ENCODE measurements at regions of chr2 and their contacts with region 1.

Region 1: GRCh38 chr2:101341901-101342624 is 33.6 kb upstream of the RNF149 start:
- DNase-seq: peak; percentile 68 to 97
- H3K4me3 ChIP-seq: no peak overlapping the region
- H3K27ac ChIP-seq: no peak overlapping the region
- H3K4me1 ChIP-seq: peaks cover 7 to 19% (median 12%) of the 10 kb centered on the region in 4 experiments
- H3K27me3 ChIP-seq: no peaks in the 10 kb centered on the region
- CTCF ChIP-seq: peak; percentile 74 to 88 (median 85)
- EP300 ChIP-seq: no peak
- POLR2A ChIP-seq: no peak
- RAD21 ChIP-seq: peak; percentile 86 to 89

Region 2: DNA sequence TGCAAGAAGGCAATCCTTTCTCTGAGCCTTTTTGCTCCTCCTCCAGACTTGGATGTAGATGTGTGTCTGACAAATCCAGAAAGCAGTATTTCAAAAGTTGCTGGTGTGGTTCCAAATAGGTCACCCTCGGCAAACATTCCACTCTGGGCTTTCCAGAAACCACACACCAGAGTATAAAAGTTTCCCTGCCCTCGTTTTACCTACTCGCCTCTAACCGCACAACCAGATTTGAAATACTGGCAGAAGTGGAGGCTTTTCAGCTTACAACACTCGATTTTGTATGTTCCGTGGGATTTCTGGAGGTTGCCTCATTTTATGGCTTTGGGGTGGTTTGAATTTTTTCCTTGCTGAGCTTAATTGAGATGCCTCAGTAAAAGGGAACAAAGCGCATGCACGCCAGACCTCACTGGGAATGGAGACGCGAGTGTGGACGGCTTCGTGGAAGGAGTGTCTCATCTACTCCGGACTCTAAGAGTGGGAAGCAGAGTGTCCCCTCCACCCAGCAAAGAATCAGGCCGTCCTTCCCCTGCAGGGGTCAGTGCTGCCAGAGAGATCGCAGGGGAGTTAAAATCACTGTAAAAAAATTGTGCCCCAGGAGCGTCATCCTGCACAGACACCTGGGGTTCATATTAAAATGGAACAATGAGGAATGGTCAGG is 383.9 kb before region 1 on chr2:
- CTCF ChIA-PET with region 1: no interaction called
- POLR2A ChIA-PET with region 1: no interaction called
- DNase-seq: no peak
- H3K4me3 ChIP-seq: no peak overlapping the region
- H3K27ac ChIP-seq: no peak overlapping the region
- H3K4me1 ChIP-seq: peaks cover 0 to 3% (median 0%) of the 10 kb centered on the region in 4 experiments; a peak in 1 of 7 replicates
- H3K27me3 ChIP-seq: no peaks in the 10 kb centered on the region
- CTCF ChIP-seq: peak in 1 of 3 experiments; percentile 1; a peak in 1 of 4 replicates
- EP300 ChIP-seq: no peak
- POLR2A ChIP-seq: no peak
- RAD21 ChIP-seq: 0 out of 4 replicates have a peak, but pooled peaks of 1 of the 2 experiments have one; percentile 8

Region 3: GRCh38 chr2:101057051-101057933 is 284.8 kb before region 1 on chr2:
- CTCF ChIA-PET with region 1: no interaction called
- POLR2A ChIA-PET with region 1: no interaction called
- DNase-seq: no peak
- H3K4me3 ChIP-seq: no peak overlapping the region
- H3K27ac ChIP-seq: no peak overlapping the region
- H3K4me1 ChIP-seq: peaks cover 0 to 4% (median 1%) of the 10 kb centered on the region in 4 experiments; a peak in 2 of 7 replicates
- H3K27me3 ChIP-seq: no peaks in the 10 kb centered on the region
- CTCF ChIP-seq: no peak
- EP300 ChIP-seq: no peak
- POLR2A ChIP-seq: no peak
- RAD21 ChIP-seq: no peak

Region 4: DNA sequence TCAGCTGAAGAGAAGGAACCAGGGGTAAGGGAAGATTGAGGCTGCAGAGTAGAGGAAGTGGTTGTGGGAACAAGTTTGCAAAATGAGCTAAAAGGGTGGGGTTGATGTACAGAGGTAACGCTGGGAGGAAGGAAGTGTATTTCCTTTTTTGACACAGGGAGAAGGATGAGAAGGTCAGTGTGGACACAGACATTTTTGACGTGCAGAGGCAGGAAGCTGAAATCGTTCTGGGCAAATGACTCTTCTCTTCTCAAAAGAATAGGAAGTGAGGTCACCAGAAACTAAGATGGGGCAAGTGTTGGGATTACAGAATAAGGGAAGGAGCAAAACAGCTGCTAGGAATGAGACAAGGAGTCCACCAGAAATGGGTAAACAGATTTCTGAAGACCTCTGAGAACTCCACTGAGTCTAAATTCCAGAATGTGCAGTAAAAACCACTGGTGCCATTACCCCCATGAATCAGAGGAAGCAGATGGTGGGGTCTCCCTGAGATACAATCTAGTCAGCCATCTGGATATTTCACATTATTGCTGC is 13.5 kb before region 1 on chr2:
- CTCF ChIA-PET with region 1: interaction called, 19 read pairs
- POLR2A ChIA-PET with region 1: interaction called, 7 read pairs
- DNase-seq: no peak
- H3K4me3 ChIP-seq: no peak overlapping the region; a peak in 1 of 8 replicates
- H3K27ac ChIP-seq: no peak overlapping the region; the same call in 1 of the 2 replicates
- H3K4me1 ChIP-seq: peaks cover 10 to 27% (median 17%) of the 10 kb centered on the region in 4 experiments; a peak in 6 of 7 replicates
- H3K27me3 ChIP-seq: no peaks in the 10 kb centered on the region
- CTCF ChIP-seq: no peak
- EP300 ChIP-seq: no peak
- POLR2A ChIP-seq: no peak
- RAD21 ChIP-seq: no peak

Region 5: DNA sequence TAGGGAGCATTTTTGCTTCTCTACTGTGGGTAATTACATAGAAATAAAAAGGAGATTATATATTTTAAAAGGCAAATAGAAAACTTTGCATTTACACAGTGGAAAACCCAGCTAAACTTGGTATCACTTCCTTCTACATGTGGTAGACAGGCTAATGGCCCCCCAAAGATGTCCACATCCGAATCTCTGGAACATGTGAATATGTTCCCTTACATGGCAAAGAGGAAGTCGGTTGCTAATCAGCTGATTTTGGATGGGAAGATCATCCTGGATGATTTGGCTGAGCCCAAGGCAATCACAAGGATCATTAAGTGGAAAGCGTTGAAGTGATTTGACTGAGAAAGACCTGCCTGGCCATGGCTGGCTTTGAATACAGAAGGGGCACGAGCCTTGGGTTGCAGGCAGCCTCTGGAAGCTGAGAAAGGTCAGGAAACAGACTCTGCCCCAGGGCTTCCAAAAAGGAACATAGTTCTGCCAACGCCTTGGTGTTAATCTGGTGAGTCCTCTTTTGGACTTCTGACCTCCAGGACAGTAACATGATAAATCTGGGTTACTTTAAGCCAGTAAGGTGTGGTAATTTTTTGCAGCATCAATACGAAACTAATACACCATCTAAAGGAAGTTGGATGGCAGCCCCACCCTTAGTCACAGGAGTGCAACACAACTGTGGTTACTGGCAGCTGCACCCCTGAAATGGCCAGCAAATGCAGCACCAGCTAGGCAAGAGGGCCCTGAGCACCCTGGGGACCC is 19.2 kb after region 1 on chr2:
- CTCF ChIA-PET with region 1: interaction called, 14 read pairs
- POLR2A ChIA-PET with region 1: no interaction called
- DNase-seq: no peak
- H3K4me3 ChIP-seq: no peak overlapping the region
- H3K27ac ChIP-seq: no peak overlapping the region
- H3K4me1 ChIP-seq: peaks cover 2 to 7% (median 2%) of the 10 kb centered on the region in 4 experiments; a peak in 5 of 7 replicates
- H3K27me3 ChIP-seq: no peaks in the 10 kb centered on the region
- CTCF ChIP-seq: no peak
- EP300 ChIP-seq: no peak
- POLR2A ChIP-seq: no peak
- RAD21 ChIP-seq: no peak

Region 6: DNA sequence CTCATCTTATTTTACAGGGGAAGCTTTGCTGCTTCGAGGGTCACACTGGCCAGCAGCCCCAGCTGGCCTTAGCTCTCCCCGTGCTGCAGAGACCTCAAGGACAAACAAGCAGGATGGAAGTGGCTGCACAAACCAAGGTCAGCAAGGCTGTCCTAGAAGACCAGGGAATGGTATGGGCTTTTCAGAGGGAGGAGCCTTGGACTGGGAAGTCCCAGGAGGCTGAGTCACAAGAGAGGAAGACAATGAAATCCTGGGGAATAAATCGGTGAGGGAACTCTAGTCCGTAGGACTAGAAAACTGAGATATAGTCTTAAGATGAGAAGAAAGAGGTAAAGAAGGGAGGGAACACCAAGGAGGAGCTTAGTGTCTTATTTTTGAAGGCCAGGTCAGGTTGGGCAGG is 29.6 kb after region 1 on chr2:
- CTCF ChIA-PET with region 1: interaction called, 14 read pairs
- POLR2A ChIA-PET with region 1: no interaction called
- DNase-seq: no peak
- H3K4me3 ChIP-seq: no peak overlapping the region
- H3K27ac ChIP-seq: no peak overlapping the region
- H3K4me1 ChIP-seq: no peaks in the 10 kb centered on the region; a peak in 1 of 7 replicates
- H3K27me3 ChIP-seq: no peaks in the 10 kb centered on the region
- CTCF ChIP-seq: no peak
- EP300 ChIP-seq: no peak
- POLR2A ChIP-seq: no peak
- RAD21 ChIP-seq: no peak

Region 7: GRCh38 chr2:101380376-101380775 is 38.3 kb after region 1 on chr2:
- CTCF ChIA-PET with region 1: interaction called, 48 read pairs
- POLR2A ChIA-PET with region 1: interaction called, 4 read pairs
- DNase-seq: no peak
- H3K4me3 ChIP-seq: no peak overlapping the region
- H3K27ac ChIP-seq: no peak overlapping the region
- H3K4me1 ChIP-seq: peaks cover 0 to 6% (median 0%) of the 10 kb centered on the region in 4 experiments; a peak in 3 of 7 replicates
- H3K27me3 ChIP-seq: peaks cover 0 to 4% (median 2%) of the 10 kb centered on the region in 4 experiments; a peak in 3 of 7 replicates
- CTCF ChIP-seq: no peak
- EP300 ChIP-seq: no peak
- POLR2A ChIP-seq: no peak
- RAD21 ChIP-seq: no peak

Measured in H1 (cell line).